ENCODE measurements at regions of chr9 and their contacts with region 1.

Region 1: GRCh38 chr9:126604059-126605055 is 9.4 kb upstream of the LMX1B start:
- DNase-seq: no peak
- CTCF ChIP-seq: no peak

Region 2: DNA sequence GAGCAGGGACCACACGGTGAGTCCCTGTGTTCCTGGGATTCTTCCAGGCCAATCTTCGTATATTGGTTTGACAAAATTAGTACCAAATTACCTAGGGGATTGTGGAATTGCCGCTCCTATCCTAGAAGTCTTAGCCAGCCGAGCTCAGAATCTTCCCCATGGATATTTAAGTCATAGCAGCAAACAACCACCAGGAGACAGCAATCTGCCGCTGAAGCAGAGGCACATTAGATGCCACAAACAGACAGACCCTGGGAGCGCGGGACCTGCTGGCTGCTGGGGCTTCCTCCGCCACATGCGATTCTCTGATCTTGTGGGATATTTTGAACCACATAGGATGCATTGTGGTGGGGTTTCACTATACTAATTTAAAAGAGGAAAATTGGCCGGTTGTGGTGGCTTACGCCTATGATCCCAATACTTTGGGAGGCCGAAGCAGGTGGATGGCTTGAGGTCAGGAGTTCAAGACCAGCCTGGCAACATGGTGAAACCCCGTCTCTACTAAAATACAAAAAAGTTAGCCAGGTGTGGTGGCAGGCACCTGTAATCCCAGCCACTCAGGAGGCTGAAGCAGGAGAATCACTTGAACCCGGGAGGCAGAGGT is 168.7 kb after region 1 on chr9:
- in situ Hi-C with region 1: loop called (anchors 10 kb)
- DNase-seq: no peak
- CTCF ChIP-seq: no peak

Measured in GM13976 (cell line).